Naive thymus-derived CD4-positive, alpha-beta T cell (primary cell): ENCODE measurements at regions of chr1 and their contacts with region 1.

Region 1: DNA sequence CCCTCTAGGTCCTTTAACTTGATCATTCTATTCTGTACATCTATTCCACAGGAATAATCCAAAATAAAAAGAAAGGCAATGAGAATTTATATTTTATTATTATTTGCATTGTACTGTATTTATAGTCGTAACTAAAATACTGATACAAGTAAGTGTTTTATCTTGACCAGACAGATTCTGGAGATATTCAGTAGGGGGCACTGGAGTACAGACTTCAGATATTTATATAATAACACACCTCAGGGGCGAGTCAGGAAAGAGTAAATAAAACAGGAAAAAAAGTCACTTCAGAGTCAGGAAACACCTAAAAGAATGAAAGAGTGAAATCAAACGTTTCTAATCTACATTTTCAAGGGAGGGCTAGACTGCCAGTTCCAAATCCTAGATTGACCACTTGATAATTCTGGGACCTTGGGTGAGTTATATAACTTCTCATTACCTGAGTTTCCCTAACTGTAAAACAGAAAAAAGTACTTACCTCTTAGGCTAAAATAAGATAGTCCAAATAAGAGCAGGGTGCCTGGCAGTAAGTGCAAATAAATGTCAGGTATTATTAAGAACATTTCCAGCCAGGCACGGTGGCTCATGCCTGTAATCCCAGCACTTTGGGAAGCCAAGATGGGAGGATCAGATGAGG is 31.1 kb upstream of the MTF1 start:
- DNase-seq: peak in 6 of 9 donors; percentile 22 to 49 (median 38)
- ATAC-seq: peak; percentile 64
- H3K4me3 ChIP-seq: no peak overlapping the region
- H3K4me3 Mint-ChIP-seq: no peak overlapping the region
- H3K27ac ChIP-seq: no peak overlapping the region
- H3K27ac Mint-ChIP-seq: peak overlapping the region in 4 of 9 donors; percentile 43 to 65 (median 50)
- H3K4me1 ChIP-seq: no peaks in the 10 kb centered on the region
- H3K4me1 Mint-ChIP-seq: peaks cover 0 to 10% (median 4%) of the 10 kb centered on the region in 7 donors
- H3K27me3 ChIP-seq: no peaks in the 10 kb centered on the region
- H3K27me3 Mint-ChIP-seq: no peaks in the 10 kb centered on the region

Region 2: GRCh38 chr1:37612200-37612599 is 278.3 kb before region 1 on chr1:
- CTCF ChIA-PET with region 1: no interaction called
- POLR2A ChIA-PET with region 1: no interaction called
- intact Hi-C with region 1: no loop called
- DNase-seq: no peak
- ATAC-seq: no peak
- H3K4me3 ChIP-seq: no peak overlapping the region
- H3K4me3 Mint-ChIP-seq: no peak overlapping the region
- H3K27ac ChIP-seq: no peak overlapping the region
- H3K27ac Mint-ChIP-seq: no peak overlapping the region
- H3K4me1 ChIP-seq: no peaks in the 10 kb centered on the region
- H3K4me1 Mint-ChIP-seq: no peaks in the 10 kb centered on the region
- H3K27me3 ChIP-seq: no peaks in the 10 kb centered on the region
- H3K27me3 Mint-ChIP-seq: peaks cover 9 to 29% (median 14%) of the 10 kb centered on the region in 5 donors

Region 3: GRCh38 chr1:37931361-37932158 is 41.1 kb after region 1 on chr1:
- CTCF ChIA-PET with region 1: interaction called, 3 read pairs
- POLR2A ChIA-PET with region 1: no interaction called
- intact Hi-C with region 1: loop called in 1 of 2 experiments (anchors 5 kb)
- DNase-seq: peak; percentile 92 to 97 (median 96)
- ATAC-seq: peak; percentile 100
- H3K4me3 ChIP-seq: peak overlapping the region; percentile 67
- H3K4me3 Mint-ChIP-seq: peak overlapping the region; percentile 89 to 99 (median 98)
- H3K27ac ChIP-seq: peak overlapping the region; percentile 79
- H3K27ac Mint-ChIP-seq: peak overlapping the region; percentile 78 to 94 (median 87)
- H3K4me1 ChIP-seq: peaks cover 15 to 17% of the 10 kb centered on the region in 2 donors
- H3K4me1 Mint-ChIP-seq: peaks cover 22 to 52% (median 39%) of the 10 kb centered on the region in 7 donors
- H3K27me3 ChIP-seq: no peaks in the 10 kb centered on the region
- H3K27me3 Mint-ChIP-seq: peaks cover 0 to 3% (median 0%) of the 10 kb centered on the region in 5 donors

Region 4: GRCh38 chr1:37978541-37978940 is 88.0 kb after region 1 on chr1:
- CTCF ChIA-PET with region 1: no interaction called
- POLR2A ChIA-PET with region 1: no interaction called
- intact Hi-C with region 1: loop called (anchors 1 kb)
- DNase-seq: no peak
- ATAC-seq: no peak
- H3K4me3 ChIP-seq: no peak overlapping the region
- H3K4me3 Mint-ChIP-seq: no peak overlapping the region
- H3K27ac ChIP-seq: no peak overlapping the region
- H3K27ac Mint-ChIP-seq: no peak overlapping the region
- H3K4me1 ChIP-seq: no peaks in the 10 kb centered on the region
- H3K4me1 Mint-ChIP-seq: peaks cover 0 to 10% (median 2%) of the 10 kb centered on the region in 7 donors
- H3K27me3 ChIP-seq: no peaks in the 10 kb centered on the region
- H3K27me3 Mint-ChIP-seq: no peaks in the 10 kb centered on the region